ENCODE measurements at regions of chr12 and their contacts with region 1.

Region 1: GRCh38 chr12:54032627-54033100 is at the start of gene HOXC5:
- DNase-seq: peak; percentile 38
- ATAC-seq: 0 out of 2 replicates have a peak, but pooled peaks have one; percentile 48
- H3K4me3 ChIP-seq: no peak within 1 kb of the TSS; the same call in 1 of the 2 replicates
- H3K27ac ChIP-seq: no peak within 1 kb of the TSS
- H3K4me1 ChIP-seq: no peaks in the 10 kb centered on the region
- H3K27me3 ChIP-seq: peaks cover 77% of the 10 kb centered on the region
- CTCF ChIP-seq: peak; percentile 71
- POLR2A ChIP-seq: no peak
- RAD21 ChIP-seq: peak; percentile 70
- total RNA-seq, gene HOXC5: not detected in 2 replicates

Region 2: DNA sequence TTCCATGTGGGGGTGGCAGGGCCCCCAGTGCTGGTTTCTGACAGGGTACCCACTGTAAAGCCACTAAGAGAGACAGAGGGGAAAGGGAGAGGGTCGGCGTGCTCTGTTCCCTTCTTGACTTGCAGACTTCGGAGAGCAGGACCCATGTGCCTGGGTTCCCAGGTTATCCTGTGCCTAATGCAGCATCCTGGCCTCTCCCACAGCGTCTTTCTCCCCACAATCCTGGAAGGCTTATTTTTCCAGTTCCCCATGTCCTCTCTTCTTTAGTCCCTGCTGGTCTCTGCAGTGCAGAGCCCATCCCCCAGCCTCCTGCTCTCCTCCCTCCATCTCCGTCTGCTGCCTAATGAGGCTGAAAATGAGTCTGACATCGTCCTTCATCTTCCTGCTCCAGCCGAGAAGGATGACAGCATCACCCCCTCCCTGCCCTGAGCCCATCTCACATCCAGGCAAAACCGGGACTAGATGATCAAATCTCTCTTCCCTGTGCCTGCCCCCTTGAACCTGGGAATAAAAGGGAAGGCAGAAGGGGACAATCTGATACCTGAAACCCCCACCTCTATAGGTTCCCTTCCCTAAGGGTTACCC is 320.5 kb before region 1 on chr12:
- CTCF ChIA-PET with region 1: no interaction called
- POLR2A ChIA-PET with region 1: no interaction called
- dilution Hi-C with region 1: no loop called
- in situ Hi-C with region 1: no loop called
- intact Hi-C with region 1: no loop called
- DNase-seq: no peak
- ATAC-seq: no peak
- H3K4me3 ChIP-seq: no peak overlapping the region
- H3K27ac ChIP-seq: no peak overlapping the region
- H3K4me1 ChIP-seq: no peaks in the 10 kb centered on the region
- H3K27me3 ChIP-seq: peaks cover under 1% of the 10 kb centered on the region; the same call in 1 of the 2 replicates
- CTCF ChIP-seq: no peak
- POLR2A ChIP-seq: no peak
- RAD21 ChIP-seq: no peak

Region 3: DNA sequence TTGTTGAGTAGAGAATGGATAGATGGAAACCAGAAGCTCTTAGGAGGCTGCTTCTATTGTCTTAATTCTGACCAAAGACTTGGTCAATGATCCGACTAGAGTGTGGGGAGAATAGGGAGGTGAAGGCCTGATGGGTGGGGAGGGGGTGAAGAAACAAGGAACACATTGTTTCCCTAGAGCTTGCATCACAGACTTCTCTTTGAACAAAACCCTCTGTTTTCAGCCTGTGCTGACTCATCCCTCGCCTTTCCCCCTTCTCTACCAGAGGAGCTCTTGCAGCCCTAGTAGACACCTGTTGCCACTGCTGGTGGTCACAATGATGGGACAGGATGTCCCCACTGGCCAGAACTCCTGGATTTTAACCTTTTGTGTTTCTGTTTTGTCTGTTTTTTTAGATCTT is 234.1 kb before region 1 on chr12:
- CTCF ChIA-PET with region 1: interaction called, 11 read pairs
- POLR2A ChIA-PET with region 1: no interaction called
- dilution Hi-C with region 1: no loop called
- in situ Hi-C with region 1: no loop called
- intact Hi-C with region 1: no loop called
- DNase-seq: no peak
- ATAC-seq: no peak
- H3K4me3 ChIP-seq: no peak overlapping the region
- H3K27ac ChIP-seq: no peak overlapping the region
- H3K4me1 ChIP-seq: no peaks in the 10 kb centered on the region
- H3K27me3 ChIP-seq: peaks cover 37% of the 10 kb centered on the region
- CTCF ChIP-seq: no peak
- POLR2A ChIP-seq: no peak
- RAD21 ChIP-seq: no peak

Region 4: GRCh38 chr12:54126696-54127537 is 94.3 kb after region 1 on chr12:
- CTCF ChIA-PET with region 1: no interaction called
- POLR2A ChIA-PET with region 1: no interaction called
- dilution Hi-C with region 1: no loop called
- in situ Hi-C with region 1: no loop called
- intact Hi-C with region 1: no loop called
- DNase-seq: no peak
- ATAC-seq: no peak
- H3K4me3 ChIP-seq: no peak overlapping the region
- H3K27ac ChIP-seq: no peak overlapping the region
- H3K4me1 ChIP-seq: no peaks in the 10 kb centered on the region
- H3K27me3 ChIP-seq: peaks cover 48% of the 10 kb centered on the region
- CTCF ChIP-seq: no peak
- POLR2A ChIP-seq: no peak
- RAD21 ChIP-seq: no peak

Region 5: GRCh38 chr12:54191550-54192022 is 158.9 kb after region 1 on chr12:
- CTCF ChIA-PET with region 1: interaction called, 10 read pairs
- POLR2A ChIA-PET with region 1: no interaction called
- dilution Hi-C with region 1: no loop called
- in situ Hi-C with region 1: no loop called
- intact Hi-C with region 1: no loop called
- DNase-seq: peak; percentile 79
- ATAC-seq: peak; percentile 74
- H3K4me3 ChIP-seq: no peak overlapping the region
- H3K27ac ChIP-seq: no peak overlapping the region
- H3K4me1 ChIP-seq: peaks cover 2% of the 10 kb centered on the region
- H3K27me3 ChIP-seq: peaks cover 21% of the 10 kb centered on the region
- CTCF ChIP-seq: peak; percentile 89
- POLR2A ChIP-seq: no peak
- RAD21 ChIP-seq: peak; percentile 81